ENCODE measurements at regions of chr16 and their contacts with region 1.

Region 1: DNA sequence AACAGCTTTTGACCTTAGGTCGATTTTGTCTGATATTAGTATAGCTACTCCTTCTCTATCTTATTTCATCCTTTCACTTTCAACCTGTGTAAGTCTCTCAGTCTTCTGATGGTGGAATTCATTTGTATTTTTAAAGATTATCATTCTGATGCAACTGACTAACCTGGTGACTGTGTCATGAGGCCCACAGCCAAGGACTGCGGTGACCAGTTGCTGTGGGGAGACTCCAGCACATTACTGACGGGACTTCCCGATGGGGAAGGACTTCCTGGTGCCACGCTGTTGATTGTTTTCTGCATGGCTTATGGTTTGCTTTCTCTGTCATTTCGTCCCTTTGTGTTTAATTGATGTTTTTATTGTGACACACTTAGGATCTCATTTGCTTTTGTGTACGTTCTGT is 34.2 kb downstream of the RMI2 start:
- DNase-seq: peak; percentile 77
- CTCF ChIP-seq: no peak

Region 2: DNA sequence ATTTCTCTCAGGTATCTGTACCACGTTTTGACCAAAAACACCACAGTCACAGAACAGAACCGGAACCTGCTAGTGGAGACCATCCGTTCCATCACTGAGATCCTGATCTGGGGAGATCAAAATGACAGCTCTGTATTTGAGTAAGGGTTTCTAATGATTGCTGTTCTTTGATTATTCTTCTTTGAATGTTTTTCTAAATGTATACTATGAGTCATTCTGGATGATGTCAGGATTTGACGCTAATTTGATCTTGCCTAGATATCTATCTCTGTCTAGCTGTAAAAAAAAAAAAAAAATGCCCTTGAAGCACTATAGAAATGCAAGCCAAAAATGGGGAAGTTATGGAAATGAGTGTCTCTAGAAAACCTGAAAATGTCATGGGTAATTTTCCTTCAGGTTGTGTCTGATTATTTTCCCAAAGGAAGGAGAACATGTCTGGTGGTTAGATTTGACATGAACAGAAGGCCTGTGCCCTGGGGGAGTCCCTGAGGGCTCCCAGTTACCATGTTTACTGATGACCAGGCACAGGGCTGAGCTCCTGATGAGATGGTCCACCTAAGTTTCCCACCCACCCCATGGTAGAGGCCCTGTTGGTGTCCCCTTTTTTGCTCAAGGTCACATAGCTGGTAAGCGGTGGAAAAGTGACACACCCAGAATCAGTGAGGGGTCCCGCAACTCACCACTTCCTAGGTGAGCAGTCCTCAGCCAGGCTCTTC is 421.5 kb before region 1 on chr16:
- in situ Hi-C with region 1: loop called (anchors 10 kb)
- DNase-seq: no peak
- CTCF ChIP-seq: no peak

Region 3: DNA sequence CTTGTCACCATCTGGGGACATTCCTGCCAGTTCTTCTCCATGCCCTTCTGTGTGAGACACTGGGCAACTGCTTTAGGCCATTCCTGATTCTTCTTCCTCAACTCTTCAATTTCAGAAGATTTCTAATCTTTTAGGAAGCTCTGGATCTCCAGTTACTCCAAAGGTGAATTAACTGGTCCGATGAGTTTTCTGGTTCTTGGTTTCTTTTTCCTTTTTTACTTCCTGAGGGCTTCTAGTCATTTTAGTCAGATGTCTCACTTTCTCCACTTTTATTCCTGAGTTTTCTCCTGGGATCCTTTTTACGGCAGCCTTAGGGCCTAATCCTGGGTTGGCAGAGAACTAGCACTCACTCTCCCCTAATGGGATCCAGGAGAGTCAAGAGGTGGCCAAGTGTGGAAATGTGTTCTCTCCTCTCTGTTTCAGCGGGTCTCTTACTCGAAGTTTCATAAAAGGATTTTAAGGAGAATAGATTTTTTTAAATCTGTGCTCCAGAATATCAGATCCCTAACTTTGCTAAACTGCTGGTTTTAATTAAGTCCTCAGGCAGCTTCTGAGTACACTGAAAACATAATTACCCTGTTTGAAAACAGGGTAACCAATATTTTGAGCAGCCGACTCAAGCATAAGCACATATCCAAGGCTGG is 73.4 kb after region 1 on chr16:
- in situ Hi-C with region 1: no loop called
- DNase-seq: no peak
- CTCF ChIP-seq: no peak